ENCODE measurements at regions of chr15 and their contacts with region 1.

Region 1: DNA sequence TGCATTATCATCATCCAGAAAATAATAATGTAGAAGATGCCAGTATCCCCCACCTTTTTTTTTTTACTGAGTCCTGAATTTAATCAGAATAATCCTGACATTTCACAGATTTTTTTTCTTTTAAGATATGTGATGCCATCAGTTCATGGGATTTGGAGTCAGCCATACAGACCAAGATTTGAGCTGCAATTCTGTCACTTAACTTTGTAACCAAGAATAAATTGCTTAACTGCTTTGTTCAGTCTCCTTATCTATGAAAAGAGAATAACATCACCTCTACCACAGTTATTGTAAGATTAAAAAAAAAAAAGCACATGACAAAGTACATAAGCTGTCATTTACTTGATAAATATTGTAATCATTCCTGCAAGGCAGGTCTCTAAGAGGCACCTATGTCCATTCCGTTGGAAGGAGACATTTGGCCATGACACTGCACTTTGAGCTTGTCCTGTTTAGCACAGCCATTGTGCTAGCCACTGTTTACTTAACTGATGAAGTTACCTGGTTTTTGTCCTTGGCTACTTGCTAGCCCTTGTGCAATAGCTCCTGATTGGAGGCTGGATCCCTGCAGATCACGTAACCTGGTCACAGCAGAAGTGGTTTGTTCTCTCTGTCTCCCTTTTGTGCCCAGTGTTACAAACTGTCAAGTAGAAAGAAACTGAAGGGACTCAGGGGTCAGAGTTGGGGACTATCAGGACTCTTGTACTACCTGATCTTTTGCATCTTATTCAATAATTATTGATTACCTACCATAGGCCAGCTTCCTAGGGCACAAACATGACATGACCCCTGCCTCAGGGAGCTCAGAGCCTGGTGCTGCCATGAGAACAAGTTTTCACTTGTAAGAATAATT is 306.0 kb downstream of the WDR72 start:
- DNase-seq: peak in 4 of 6 donors; percentile 60 to 89 (median 86)
- ATAC-seq: peak; percentile 80 to 89 (median 82)
- H3K4me3 ChIP-seq: no peak overlapping the region
- H3K27ac ChIP-seq: peak overlapping the region; percentile 67 to 86 (median 71)
- H3K4me1 ChIP-seq: peaks cover 38 to 46% (median 39%) of the 10 kb centered on the region in 3 donors
- H3K27me3 ChIP-seq: no peaks in the 10 kb centered on the region
- CTCF ChIP-seq: no peak

Region 2: GRCh38 chr15:52780172-52780980 is 673.1 kb before region 1 on chr15:
- intact Hi-C with region 1: loop called in 1 of 3 experiments (anchors 10 kb)
- DNase-seq: peak in 5 of 6 donors; percentile 57 to 86 (median 71)
- ATAC-seq: peak; percentile 8 to 28 (median 12)
- H3K4me3 ChIP-seq: peak overlapping the region in 1 of 4 donors; percentile 6
- H3K27ac ChIP-seq: peak overlapping the region in 2 of 4 donors; percentile 32 to 40
- H3K4me1 ChIP-seq: peaks cover 8 to 39% (median 34%) of the 10 kb centered on the region in 3 donors
- H3K27me3 ChIP-seq: no peaks in the 10 kb centered on the region
- CTCF ChIP-seq: peak; percentile 62 to 86 (median 70)

Region 3: DNA sequence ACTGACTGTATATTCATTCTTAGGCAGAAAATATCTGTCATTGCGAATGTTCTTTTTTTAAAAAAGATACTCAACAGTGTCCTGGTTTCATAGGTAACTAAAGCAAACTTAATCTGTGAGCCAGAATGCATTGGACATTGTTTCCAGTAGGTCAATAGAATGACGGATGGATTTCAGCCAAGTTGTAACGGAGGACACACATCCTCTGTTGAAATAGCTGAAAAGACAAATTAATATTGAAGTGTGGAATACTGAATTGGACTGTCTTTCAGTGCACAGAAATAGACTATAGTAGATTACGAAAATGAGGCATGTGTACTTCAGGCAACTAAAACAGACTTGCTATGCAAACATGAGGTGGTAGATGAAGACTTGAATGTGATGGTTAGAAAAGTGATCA is 155.7 kb before region 1 on chr15:
- intact Hi-C with region 1: no loop called
- DNase-seq: no peak
- ATAC-seq: no peak
- H3K4me3 ChIP-seq: no peak overlapping the region
- H3K27ac ChIP-seq: no peak overlapping the region
- H3K4me1 ChIP-seq: no peaks in the 10 kb centered on the region
- H3K27me3 ChIP-seq: no peaks in the 10 kb centered on the region
- CTCF ChIP-seq: no peak